ENCODE measurements at regions of chr6 and their contacts with region 1.

Region 1: GRCh38 chr6:2931970-2932748 is 29.1 kb upstream of the SERPINB9 start:
- H3K4me3 ChIP-seq: no peak overlapping the region
- H3K27ac ChIP-seq: no peak overlapping the region
- H3K4me1 ChIP-seq: no peaks in the 10 kb centered on the region
- CTCF ChIP-seq: peak; percentile 92

Region 2: DNA sequence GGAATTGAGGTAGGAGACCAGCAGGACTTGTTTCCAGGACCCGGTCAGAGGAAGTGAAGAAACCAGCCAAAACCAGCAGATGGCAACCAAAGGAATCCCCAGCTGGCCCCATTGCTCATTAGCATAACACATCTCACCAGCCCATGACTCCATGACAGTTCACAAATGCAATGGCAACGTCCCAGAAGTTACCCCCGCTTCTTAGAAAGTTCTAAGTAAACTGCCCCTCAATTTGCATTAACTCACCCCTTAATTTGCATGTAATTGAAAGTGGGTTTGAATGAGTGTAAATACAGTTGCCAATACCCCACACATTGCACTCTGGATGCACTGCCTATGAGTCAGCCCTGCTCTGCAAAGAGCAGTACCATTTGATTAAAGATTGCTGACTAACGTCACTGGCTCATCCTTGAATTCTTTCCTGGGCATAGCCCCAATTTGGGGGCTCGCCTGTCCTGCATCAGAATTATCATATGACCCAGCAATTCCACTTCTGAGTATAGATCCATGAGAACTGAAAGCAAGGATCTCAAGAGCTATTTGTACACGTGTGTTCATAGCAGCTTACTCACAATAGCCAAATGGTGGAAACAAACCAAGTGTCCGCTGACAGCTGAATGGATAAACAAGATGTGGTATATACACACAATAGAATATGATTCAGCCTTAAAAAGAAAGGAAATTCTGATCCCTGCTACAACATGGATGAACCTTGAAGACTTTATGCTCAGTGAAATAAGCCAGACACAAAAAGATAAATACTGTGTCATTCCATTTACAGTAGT is 217.9 kb before region 1 on chr6:
- CTCF ChIA-PET with region 1: no interaction called
- POLR2A ChIA-PET with region 1: no interaction called
- H3K4me3 ChIP-seq: no peak overlapping the region
- H3K27ac ChIP-seq: no peak overlapping the region
- H3K4me1 ChIP-seq: no peaks in the 10 kb centered on the region
- CTCF ChIP-seq: no peak

Region 3: DNA sequence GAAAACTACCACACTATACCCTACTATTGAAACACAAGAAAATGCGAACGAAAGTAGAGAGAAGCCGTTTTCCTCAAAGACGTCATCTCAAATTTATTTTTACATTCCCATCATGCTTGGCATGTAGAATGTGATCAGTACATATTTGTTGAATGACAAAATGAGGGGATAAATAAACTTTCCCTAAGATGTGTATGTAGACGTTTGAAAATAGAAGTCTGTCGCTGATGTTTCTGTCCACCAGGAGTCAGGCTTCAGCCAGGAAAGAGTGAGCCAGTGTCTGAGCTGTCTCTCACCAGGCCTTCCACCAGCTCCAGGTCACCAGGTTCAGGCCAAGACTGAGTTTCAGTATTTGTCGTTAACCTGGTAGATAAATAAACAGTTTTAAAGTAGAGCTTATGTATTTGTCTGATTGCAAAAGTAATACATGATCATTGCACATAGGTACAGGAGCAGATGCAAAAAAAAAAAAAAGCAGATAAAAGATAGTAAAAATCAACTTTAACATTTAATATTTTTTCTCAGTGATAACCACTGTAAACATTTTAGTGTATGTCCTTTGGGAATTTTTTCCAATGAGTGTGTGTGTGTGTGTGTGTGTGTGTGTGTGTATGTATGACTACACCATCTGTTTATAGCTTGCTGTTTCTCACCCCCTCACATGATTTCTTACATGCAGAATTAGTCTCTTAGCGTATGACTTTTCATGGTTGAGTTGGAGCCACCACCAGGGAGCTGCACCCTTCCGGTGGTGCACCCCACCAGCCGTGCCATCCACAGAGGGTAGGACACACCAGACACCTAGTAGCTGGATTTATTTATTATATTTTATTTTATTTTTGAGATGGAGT is 140.8 kb before region 1 on chr6:
- CTCF ChIA-PET with region 1: interaction called, 74 read pairs
- POLR2A ChIA-PET with region 1: no interaction called
- H3K4me3 ChIP-seq: no peak overlapping the region
- H3K27ac ChIP-seq: no peak overlapping the region
- H3K4me1 ChIP-seq: no peaks in the 10 kb centered on the region
- CTCF ChIP-seq: peak; percentile 59; the same call in 1 of the 2 replicates

Region 4: DNA sequence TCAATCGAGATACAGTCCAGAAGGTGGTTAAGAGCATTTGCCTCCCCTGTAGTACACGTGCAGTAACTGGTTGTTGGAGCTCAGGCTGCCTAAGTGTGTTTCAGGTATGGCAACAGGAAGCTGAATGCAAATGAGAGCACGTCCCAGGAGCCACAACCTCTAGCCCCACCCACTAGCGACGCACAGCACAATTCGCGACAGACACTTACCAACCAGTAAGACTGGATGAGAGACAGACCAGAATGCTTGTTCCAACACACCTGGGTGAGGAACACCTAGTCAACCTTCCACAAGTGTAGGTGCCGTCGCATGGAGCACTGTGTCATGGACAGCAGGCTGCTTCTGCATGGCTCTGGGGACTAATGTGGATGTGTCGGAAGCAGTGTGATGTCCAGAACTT is 83.3 kb before region 1 on chr6:
- CTCF ChIA-PET with region 1: interaction called, 205 read pairs
- POLR2A ChIA-PET with region 1: interaction called, 9 read pairs
- H3K4me3 ChIP-seq: no peak overlapping the region
- H3K27ac ChIP-seq: no peak overlapping the region
- H3K4me1 ChIP-seq: peaks cover 6% of the 10 kb centered on the region; the same call in 1 of the 2 replicates
- CTCF ChIP-seq: no peak

Region 5: DNA sequence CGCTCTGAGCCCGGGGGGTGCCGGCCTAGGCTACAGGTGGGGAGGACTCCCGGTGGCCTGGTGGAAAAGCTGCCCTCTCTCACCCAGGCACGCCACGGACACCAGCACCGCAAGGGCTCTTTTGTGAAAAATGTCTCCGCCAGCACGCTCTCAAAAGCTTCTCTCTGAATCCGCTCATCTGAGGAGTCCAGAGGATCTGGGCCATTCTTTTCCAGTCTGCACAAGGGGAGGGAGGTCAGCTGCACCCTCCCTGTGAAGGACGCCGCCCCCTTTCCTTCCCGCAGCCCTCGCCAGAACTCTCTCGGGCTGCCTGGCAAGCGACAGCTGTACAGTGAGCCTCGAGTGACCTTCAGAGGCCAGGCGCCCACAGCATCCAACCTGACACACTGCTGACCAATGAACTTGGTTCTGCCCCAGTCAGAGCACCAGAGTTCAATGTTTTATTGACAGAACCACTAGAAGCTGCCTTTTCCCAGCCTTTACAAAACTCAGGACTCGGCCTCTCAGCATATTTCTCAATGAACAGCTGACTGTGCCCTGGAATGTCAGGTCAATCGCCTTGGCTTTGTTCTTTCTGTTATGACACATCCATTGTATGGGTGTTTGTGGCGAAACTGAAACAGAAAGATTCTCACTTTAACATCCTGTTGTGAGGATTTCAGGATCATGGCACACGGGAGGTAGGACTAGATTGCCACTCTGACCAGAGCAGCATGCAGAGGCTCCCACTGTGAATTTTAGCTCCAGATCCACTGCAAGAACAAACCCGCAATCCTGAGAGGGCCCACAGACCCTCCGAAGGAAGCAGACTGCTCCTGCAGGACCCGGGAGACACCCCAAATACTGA is 55.7 kb before region 1 on chr6:
- CTCF ChIA-PET with region 1: interaction called, 20 read pairs
- POLR2A ChIA-PET with region 1: no interaction called
- H3K4me3 ChIP-seq: no peak overlapping the region
- H3K27ac ChIP-seq: no peak overlapping the region
- H3K4me1 ChIP-seq: no peaks in the 10 kb centered on the region
- CTCF ChIP-seq: no peak

Region 6: DNA sequence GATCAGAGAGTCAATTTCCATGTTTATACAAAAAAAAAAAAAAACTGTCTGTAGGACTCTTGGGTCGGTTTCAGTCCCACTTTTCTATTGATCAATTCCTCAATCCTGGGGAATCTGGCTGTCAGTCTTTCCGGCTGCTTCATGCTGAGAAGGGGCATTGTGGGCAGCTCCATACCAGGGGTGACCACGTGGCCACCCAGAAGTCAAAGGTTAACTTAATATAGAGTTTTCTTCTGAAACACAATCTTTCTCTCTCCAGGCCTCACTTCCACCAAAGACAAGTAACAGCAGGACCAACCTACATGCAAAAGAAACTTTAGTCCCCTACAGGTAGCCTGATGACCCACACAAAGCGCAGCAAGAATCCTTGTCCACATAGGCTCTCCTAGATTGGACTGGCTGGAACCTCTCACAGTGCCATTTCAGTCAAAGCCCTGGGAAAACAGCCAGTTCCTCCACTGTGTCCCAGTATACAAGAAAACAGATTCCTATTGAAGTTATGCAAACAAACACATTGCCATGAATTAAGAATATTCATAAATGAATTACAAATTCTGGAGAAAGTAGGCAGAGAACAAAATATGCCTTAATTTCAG is 10.5 kb before region 1 on chr6:
- CTCF ChIA-PET with region 1: interaction called, 30 read pairs
- POLR2A ChIA-PET with region 1: no interaction called
- H3K4me3 ChIP-seq: no peak overlapping the region
- H3K27ac ChIP-seq: no peak overlapping the region
- H3K4me1 ChIP-seq: no peaks in the 10 kb centered on the region
- CTCF ChIP-seq: no peak

Region 7: DNA sequence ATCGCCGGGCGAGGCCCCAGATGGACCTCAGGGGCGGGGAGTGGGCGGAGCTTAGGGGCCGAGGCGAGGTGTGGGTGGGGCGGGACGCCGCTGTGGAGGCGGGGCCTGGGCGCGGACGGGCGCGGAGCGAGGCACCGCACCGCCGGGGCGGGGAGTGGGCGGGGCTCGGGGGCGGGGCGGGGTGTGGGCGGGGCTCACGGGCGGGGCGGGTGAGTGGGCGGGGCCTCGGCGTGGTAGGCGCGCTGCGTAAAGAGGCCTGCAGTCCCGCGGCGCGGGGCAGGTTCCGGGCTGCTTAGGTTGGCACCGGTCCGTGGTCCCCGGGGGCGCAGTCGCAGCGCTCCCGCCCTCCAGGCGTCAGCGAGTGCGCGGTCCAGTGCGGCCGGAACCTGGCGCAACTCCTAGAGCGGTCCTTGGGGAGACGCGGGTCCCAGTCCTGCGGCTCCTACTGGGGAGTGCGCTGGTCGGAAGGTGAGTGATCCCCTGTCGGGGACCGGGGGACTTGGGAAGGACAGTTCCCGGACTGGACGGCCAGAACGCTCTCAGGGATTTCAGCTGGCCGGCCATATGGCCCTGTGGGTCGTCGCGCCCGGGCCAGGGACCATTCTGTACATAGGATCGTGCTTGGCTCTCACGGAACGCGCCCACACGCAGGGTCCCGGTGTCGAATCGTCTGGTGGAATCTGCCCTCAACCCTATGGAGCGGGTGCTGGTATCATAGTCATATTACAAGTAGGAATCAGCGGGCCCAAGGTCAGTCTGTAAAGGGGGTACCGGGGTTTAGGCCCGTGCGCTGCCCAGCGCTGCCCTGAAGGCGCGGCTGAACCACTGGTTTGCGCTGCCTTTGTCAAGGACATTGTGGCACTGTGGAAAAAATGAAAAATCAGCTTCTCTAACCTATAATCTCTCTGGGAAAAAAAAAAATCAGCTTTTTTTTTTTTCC is 67.7 kb after region 1 on chr6 and contains the start of gene NQO2:
- CTCF ChIA-PET with region 1: interaction called, 3 read pairs
- POLR2A ChIA-PET with region 1: interaction called, 12 read pairs
- H3K4me3 ChIP-seq: peak within 1 kb of the TSS; percentile 79
- H3K27ac ChIP-seq: peak within 1 kb of the TSS; percentile 63; the same call in 1 of the 2 replicates
- H3K4me1 ChIP-seq: no peaks in the 10 kb centered on the region
- CTCF ChIP-seq: peak; percentile 70

Measured in HEK293 (cell line).